Cardiac septum (tissue), 1 donor: ENCODE measurements at regions of chr3 and their contacts with region 1.

Region 1: DNA sequence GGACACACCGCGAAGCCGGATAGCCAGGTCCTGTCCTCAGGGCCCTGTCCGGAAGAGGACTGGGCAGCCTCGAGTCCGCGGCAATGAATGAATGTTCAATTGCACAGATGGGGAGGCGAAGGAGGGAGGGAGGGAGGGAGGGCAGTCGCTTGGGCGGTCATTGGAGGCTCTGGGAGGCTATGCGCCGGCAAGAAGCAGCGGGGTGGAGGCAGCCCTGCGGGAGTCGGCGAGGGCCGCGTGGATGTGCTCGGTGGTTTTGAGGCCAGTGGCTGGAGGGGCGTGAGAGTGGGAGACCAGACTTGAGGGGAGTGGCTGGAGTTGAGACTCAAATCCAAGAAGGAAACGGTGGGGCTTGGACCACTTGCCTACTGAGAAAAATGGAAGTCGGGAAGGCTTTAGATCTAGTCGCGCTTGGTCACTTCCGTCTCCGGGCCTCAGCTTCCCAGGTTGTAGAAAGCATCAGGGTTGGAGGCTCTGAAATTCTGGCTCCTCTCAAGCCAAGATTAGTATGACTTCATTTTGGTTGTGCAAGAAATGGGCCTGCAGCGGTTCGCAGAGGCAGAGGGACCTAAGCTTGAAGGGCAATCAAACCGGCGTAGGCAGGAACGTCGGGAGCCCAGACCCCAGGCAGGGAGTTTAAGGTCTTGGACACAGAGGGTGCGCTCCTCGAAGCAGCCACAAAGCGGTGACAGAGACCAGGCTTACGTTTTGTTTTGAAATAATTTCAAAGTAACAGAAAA is 21.1 kb upstream of the PLXND1 start:
- DNase-seq: no peak

Region 2: DNA sequence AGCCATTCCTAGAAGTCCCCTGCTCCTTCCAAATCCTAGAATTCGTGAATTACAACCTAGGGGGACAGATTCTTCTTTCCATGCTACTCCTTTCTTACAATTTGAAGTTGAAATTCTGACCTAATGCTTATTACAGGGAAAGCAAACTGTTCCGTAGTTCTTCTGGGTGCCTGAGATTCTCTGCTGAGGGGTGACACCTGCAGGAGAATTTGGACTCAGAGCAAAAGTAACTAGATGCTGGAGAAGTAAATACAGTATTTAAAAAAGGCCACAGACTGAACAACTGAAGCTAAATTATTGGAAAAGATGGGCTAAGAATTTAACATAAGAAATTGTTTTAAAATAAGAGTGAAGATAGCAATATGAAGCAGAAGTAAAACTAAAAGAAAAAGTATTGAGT is 710.3 kb before region 1 on chr3:
- intact Hi-C with region 1: no loop called
- DNase-seq: no peak

Region 3: DNA sequence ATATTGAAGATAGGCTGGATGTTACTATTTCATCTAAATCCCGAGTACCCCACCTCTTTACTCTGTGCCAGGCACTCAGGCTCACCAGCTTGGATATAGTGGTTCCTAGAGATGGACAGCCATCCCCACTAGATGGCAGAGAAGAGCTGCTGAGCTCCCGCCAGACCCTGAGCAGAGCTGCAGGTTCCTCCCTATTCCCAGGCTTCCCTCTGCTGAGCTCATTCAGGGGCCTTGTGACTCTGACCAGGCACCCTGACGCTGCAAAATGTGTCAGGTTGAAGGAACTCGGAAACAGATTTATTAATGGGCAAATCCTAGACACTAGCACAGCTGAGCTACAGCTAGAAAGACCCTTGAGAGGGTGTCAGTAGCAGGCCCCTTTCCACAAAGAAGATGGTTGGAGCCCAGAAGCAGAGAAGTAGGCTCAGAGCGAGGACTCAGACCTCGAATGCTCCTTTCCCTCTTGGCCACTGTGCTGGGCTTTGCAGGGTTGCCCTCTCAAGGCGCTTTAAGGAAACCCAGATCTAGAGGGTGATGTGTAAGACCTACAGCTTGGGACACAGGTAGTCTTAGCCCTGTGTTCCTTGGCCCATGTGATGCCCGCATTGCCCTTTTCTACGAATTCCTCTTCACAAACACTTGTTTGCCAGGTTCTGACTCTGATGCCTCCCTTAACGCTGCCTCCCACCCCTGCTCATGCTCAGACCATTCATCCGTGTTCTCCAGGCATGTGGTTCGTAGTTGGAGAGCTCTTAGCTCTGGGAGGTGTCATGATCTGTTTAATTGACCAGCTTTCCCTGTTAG is 137.2 kb before region 1 on chr3:
- intact Hi-C with region 1: loop called (anchors 2 kb)
- DNase-seq: peak; percentile 92

Region 4: GRCh38 chr3:130626049-130626448 is 998.5 kb after region 1 on chr3:
- intact Hi-C with region 1: no loop called
- DNase-seq: no peak